CD8-positive, alpha-beta T cell (primary cell): ENCODE measurements at regions of chr19 and their contacts with region 1.

Region 1: GRCh38 chr19:13952154-13953035 is at the start of gene DCAF15:
- DNase-seq: peak; percentile 96 to 100 (median 99)
- ATAC-seq: peak; percentile 96
- H3K4me3 ChIP-seq: peak within 1 kb of the TSS; percentile 63 to 73
- H3K4me3 Mint-ChIP-seq: peak within 1 kb of the TSS; percentile 96
- H3K27ac ChIP-seq: peak within 1 kb of the TSS; percentile 76 to 78
- H3K27ac Mint-ChIP-seq: peak within 1 kb of the TSS; percentile 92
- H3K4me1 ChIP-seq: peaks cover 14% of the 10 kb centered on the region
- H3K4me1 Mint-ChIP-seq: peaks cover 21% of the 10 kb centered on the region
- H3K27me3 ChIP-seq: no peaks in the 10 kb centered on the region
- H3K27me3 Mint-ChIP-seq: no peaks in the 10 kb centered on the region
- CTCF ChIP-seq: no peak
- total RNA-seq, gene DCAF15: 86.5 to 101 TPM

Region 2: GRCh38 chr19:12766051-12766521 is 1186.3 kb before region 1 on chr19:
- CTCF ChIA-PET with region 1: no interaction called
- POLR2A ChIA-PET with region 1: no interaction called
- intact Hi-C with region 1: no loop called
- DNase-seq: peak in 8 of 9 experiments; percentile 54 to 90 (median 78)
- ATAC-seq: peak; percentile 61
- H3K4me3 ChIP-seq: no peak overlapping the region
- H3K4me3 Mint-ChIP-seq: no peak overlapping the region
- H3K27ac ChIP-seq: no peak overlapping the region
- H3K27ac Mint-ChIP-seq: no peak overlapping the region
- H3K4me1 ChIP-seq: no peaks in the 10 kb centered on the region
- H3K4me1 Mint-ChIP-seq: peaks cover 3% of the 10 kb centered on the region
- H3K27me3 ChIP-seq: no peaks in the 10 kb centered on the region
- H3K27me3 Mint-ChIP-seq: no peaks in the 10 kb centered on the region
- CTCF ChIP-seq: peak; percentile 56

Region 3: DNA sequence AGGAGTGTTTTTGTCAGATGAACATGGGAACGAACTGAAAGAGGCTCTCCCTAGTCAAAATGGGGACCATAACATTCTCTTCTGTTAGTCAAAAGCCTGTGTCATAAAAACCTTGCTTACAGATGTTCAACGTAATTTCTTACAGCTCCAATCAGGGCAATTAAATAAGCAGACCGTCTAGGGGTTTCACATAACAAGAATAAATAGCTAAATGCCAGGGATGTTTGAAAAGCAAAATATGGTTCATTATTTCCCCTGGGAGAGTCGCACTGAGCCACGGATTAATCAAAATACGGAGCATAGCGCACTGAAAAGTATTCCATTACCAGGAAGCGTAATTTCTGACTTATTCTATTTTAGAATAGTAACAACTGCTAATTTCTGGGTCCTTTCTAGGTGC is 251.8 kb before region 1 on chr19:
- CTCF ChIA-PET with region 1: no interaction called
- POLR2A ChIA-PET with region 1: no interaction called
- intact Hi-C with region 1: no loop called
- DNase-seq: no peak
- ATAC-seq: no peak
- H3K4me3 ChIP-seq: no peak overlapping the region
- H3K4me3 Mint-ChIP-seq: no peak overlapping the region
- H3K27ac ChIP-seq: no peak overlapping the region
- H3K27ac Mint-ChIP-seq: no peak overlapping the region
- H3K4me1 ChIP-seq: no peaks in the 10 kb centered on the region
- H3K4me1 Mint-ChIP-seq: no peaks in the 10 kb centered on the region
- H3K27me3 ChIP-seq: no peaks in the 10 kb centered on the region
- H3K27me3 Mint-ChIP-seq: peaks cover 29% of the 10 kb centered on the region
- CTCF ChIP-seq: no peak

Region 4: GRCh38 chr19:13905938-13906904 is 46.2 kb before region 1 on chr19 and contains the starts of genes BRME1 and CC2D1A:
- CTCF ChIA-PET with region 1: interaction called, 4 read pairs
- POLR2A ChIA-PET with region 1: no interaction called
- intact Hi-C with region 1: loop called (anchors 1 kb)
- DNase-seq: peak; percentile 87 to 96 (median 94)
- ATAC-seq: peak; percentile 99
- H3K4me3 ChIP-seq: peak within 1 kb of the TSS; percentile 70 to 81
- H3K4me3 Mint-ChIP-seq: peak within 1 kb of the TSS; percentile 89
- H3K27ac ChIP-seq: peak within 1 kb of the TSS; percentile 57 to 59
- H3K27ac Mint-ChIP-seq: peak within 1 kb of the TSS; percentile 84
- H3K4me1 ChIP-seq: peaks cover 12% of the 10 kb centered on the region
- H3K4me1 Mint-ChIP-seq: peaks cover 14% of the 10 kb centered on the region
- H3K27me3 ChIP-seq: no peaks in the 10 kb centered on the region
- H3K27me3 Mint-ChIP-seq: no peaks in the 10 kb centered on the region
- CTCF ChIP-seq: no peak
- total RNA-seq, gene BRME1: 1.0 to 1.2 TPM
- total RNA-seq, gene CC2D1A: 11.3 to 16.0 TPM

Region 5: DNA sequence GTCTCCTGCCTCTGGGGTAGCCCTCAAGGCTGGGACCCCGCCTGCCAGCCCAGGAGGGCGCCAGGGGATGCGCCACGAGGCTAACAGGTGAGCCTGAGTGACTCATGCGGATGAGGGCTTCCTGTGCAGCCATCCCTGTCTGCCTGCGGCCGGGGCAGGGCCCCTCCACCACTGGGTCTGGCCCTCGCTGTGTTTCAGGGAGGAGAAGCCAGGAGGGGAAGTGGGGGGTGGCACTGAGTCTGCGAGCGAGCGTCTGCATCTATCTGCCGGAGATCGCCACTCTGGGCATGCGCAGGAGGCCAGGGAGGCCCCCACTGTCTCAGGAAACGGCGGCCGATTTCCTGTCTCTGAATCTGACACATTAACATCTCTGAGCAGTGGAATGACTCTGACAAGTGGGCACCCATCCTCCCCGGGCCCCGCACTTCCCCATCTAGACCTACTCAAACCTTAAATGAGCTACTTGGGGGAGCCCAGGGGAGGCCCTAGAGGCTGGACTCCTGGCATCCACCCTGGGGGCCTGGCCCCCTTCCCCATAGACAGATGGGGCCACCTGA is 34.0 kb after region 1 on chr19:
- CTCF ChIA-PET with region 1: no interaction called
- POLR2A ChIA-PET with region 1: interaction called, 4 read pairs
- intact Hi-C with region 1: loop called in 1 of 2 experiments (anchors 1 kb)
- DNase-seq: peak; percentile 96 to 100 (median 99)
- ATAC-seq: peak; percentile 88
- H3K4me3 ChIP-seq: peak overlapping the region; percentile 24 to 59
- H3K4me3 Mint-ChIP-seq: peak overlapping the region; percentile 61
- H3K27ac ChIP-seq: peak overlapping the region; percentile 93 to 96
- H3K27ac Mint-ChIP-seq: peak overlapping the region; percentile 96
- H3K4me1 ChIP-seq: peaks cover 86% of the 10 kb centered on the region
- H3K4me1 Mint-ChIP-seq: peaks cover 86% of the 10 kb centered on the region
- H3K27me3 ChIP-seq: no peaks in the 10 kb centered on the region
- H3K27me3 Mint-ChIP-seq: no peaks in the 10 kb centered on the region
- CTCF ChIP-seq: no peak

Region 6: GRCh38 chr19:14048443-14049153 is 96.2 kb after region 1 on chr19:
- CTCF ChIA-PET with region 1: interaction called, 9 read pairs
- POLR2A ChIA-PET with region 1: no interaction called
- intact Hi-C with region 1: loop called in 1 of 2 experiments (anchors 5 kb)
- DNase-seq: peak; percentile 52 to 85 (median 78)
- ATAC-seq: peak; percentile 98
- H3K4me3 ChIP-seq: no peak overlapping the region
- H3K4me3 Mint-ChIP-seq: no peak overlapping the region
- H3K27ac ChIP-seq: peak overlapping the region in 1 of 2 experiments; percentile 34
- H3K27ac Mint-ChIP-seq: peak overlapping the region; percentile 41
- H3K4me1 ChIP-seq: no peaks in the 10 kb centered on the region
- H3K4me1 Mint-ChIP-seq: peaks cover 7% of the 10 kb centered on the region
- H3K27me3 ChIP-seq: no peaks in the 10 kb centered on the region
- H3K27me3 Mint-ChIP-seq: no peaks in the 10 kb centered on the region
- CTCF ChIP-seq: peak; percentile 94

Region 7: GRCh38 chr19:14073261-14073924 is 121.0 kb after region 1 on chr19:
- CTCF ChIA-PET with region 1: interaction called, 6 read pairs
- POLR2A ChIA-PET with region 1: no interaction called
- intact Hi-C with region 1: loop called in 1 of 2 experiments (anchors 1 kb)
- DNase-seq: peak; percentile 55 to 89 (median 76)
- ATAC-seq: peak; percentile 74
- H3K4me3 ChIP-seq: peak overlapping the region; percentile 69 to 86
- H3K4me3 Mint-ChIP-seq: peak overlapping the region; percentile 90
- H3K27ac ChIP-seq: peak overlapping the region; percentile 42 to 65
- H3K27ac Mint-ChIP-seq: peak overlapping the region; percentile 90
- H3K4me1 ChIP-seq: peaks cover 30% of the 10 kb centered on the region
- H3K4me1 Mint-ChIP-seq: peaks cover 10% of the 10 kb centered on the region
- H3K27me3 ChIP-seq: peaks cover 0 to 2% of the 10 kb centered on the region in 2 experiments
- H3K27me3 Mint-ChIP-seq: no peaks in the 10 kb centered on the region
- CTCF ChIP-seq: no peak

Region 8: DNA sequence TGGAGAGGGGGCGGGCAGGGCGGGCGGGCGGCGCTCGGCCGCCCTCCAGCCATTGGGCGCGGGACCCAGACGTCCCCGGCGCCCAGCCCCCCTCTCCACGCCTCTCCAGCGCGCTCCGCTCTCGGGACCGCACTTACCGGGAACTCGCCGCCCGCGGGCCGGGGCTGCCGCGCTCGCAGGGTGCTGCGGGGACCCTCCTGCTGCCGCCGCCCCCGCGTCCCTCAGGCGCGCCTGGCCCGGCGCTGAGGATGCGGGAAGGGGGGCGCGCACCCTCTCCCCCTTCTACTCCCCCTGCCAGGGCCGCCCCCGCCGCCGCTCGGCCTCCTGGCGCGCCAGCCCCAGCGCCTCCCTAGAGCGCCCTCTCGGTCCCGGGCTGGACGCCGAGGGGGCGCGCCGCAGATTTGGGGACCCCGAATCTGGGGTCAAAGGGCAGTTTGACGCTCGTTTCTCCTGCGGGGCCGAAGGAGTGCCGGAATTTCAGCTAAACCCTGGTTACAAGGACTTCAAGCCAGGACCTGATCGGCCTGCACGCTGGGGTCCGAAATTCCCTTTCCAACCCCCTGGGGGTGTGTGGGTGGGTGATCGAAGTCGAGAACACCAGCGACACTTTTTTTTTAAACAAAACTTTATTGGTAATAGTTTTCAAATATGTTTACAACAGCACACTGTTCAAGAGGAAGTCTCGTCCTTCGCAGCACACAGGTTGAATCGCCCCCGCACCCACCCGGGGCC is 138.9 kb after region 1 on chr19:
- CTCF ChIA-PET with region 1: no interaction called
- POLR2A ChIA-PET with region 1: no interaction called
- intact Hi-C with region 1: loop called in 1 of 2 experiments (anchors 1 kb)
- DNase-seq: peak in 8 of 9 experiments; percentile 37 to 84 (median 69)
- ATAC-seq: peak; percentile 42
- H3K4me3 ChIP-seq: peak overlapping the region; percentile 82 to 87
- H3K4me3 Mint-ChIP-seq: peak overlapping the region; percentile 99
- H3K27ac ChIP-seq: peak overlapping the region; percentile 51 to 66
- H3K27ac Mint-ChIP-seq: peak overlapping the region; percentile 98
- H3K4me1 ChIP-seq: peaks cover 13% of the 10 kb centered on the region
- H3K4me1 Mint-ChIP-seq: peaks cover 22% of the 10 kb centered on the region
- H3K27me3 ChIP-seq: no peaks in the 10 kb centered on the region
- H3K27me3 Mint-ChIP-seq: no peaks in the 10 kb centered on the region
- CTCF ChIP-seq: peak; percentile 40

Region 9: GRCh38 chr19:14237014-14237941 is 284.9 kb after region 1 on chr19:
- CTCF ChIA-PET with region 1: no interaction called
- POLR2A ChIA-PET with region 1: no interaction called
- intact Hi-C with region 1: no loop called
- DNase-seq: peak in 2 of 9 experiments; percentile 36 to 56
- ATAC-seq: peak; percentile 87
- H3K4me3 ChIP-seq: no peak overlapping the region
- H3K4me3 Mint-ChIP-seq: no peak overlapping the region
- H3K27ac ChIP-seq: no peak overlapping the region
- H3K27ac Mint-ChIP-seq: no peak overlapping the region
- H3K4me1 ChIP-seq: no peaks in the 10 kb centered on the region
- H3K4me1 Mint-ChIP-seq: peaks cover 6% of the 10 kb centered on the region
- H3K27me3 ChIP-seq: no peaks in the 10 kb centered on the region
- H3K27me3 Mint-ChIP-seq: no peaks in the 10 kb centered on the region
- CTCF ChIP-seq: no peak